MCF 10A (cell line): ENCODE measurements at regions of chr11 and their contacts with region 1.

Region 1: DNA sequence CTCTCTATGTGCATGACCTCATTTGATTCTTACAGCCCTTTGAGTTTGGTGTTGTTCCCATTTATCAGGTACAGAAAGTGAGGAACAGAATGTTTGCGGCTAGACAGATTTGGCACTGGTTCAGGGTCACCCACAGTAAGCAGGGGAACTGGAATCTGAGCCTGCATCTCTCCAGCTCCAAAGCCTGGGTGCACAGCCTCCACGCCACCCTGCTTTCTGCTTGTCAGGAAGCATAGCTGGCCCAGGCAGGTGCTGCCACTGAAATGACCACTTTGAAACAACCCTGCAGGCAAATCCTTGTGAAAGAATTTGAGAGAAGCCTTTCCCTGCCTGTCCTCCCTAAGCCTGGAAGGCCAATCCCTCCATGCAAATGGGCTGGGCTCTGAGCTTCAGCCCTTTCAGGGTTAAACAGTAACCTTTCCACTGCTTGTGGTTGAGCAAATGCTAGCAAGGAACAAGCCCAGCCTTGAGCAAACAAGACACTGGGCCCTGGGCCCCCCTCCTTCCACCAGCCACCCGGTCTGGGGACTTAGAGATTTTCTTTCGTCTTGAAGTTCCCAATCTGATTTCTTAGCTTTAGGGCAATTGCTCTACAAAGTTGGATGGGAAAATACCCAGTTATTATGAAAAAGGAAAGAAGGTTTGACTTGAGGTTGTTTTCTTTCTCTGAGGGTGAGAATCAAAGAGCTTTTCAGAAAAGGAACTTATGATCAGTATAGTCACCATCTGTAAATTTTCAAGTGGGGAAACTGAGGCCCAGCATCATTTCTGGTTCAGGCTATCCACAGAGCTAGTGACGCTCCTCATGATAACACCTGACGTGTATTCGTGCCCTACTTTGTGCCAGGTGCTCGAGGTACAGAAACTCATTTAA is 19.4 kb downstream of the EHF start:
- DNase-seq: peak; percentile 86
- H3K4me3 Mint-ChIP-seq: peak overlapping the region; percentile 45
- H3K27ac Mint-ChIP-seq: peak overlapping the region; percentile 87
- H3K4me1 Mint-ChIP-seq: peaks cover 51% of the 10 kb centered on the region
- H3K27me3 Mint-ChIP-seq: no peaks in the 10 kb centered on the region
- CTCF ChIP-seq: no peak

Region 2: DNA sequence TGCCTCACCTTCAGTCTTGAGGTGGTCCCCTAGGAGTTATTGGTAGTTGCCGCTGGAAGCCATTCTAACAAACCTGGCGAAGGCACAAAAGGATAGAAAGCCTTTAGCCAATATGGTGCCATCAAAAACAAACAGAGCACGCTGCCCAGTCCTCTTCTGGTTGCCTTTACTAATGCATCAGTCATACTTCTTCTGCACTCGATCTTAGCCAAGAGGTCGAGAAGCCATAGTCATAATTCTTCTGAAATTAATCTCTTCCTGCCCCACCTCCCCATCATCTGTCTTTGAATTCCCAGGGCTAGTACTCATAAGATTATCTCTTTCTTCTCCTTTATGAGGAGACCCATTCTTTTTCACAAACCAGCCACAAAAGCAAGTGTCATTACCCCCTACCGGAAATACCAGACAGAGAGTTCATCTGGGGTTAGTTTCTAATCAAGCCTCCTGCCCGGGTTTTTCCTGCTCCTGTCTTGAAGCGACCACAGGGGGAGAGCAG is 40.8 kb before region 1 on chr11:
- CTCF ChIA-PET with region 1: interaction called, 3 read pairs
- POLR2A ChIA-PET with region 1: interaction called, 22 read pairs
- intact Hi-C with region 1: no loop called
- DNase-seq: peak; percentile 51
- H3K4me3 Mint-ChIP-seq: no peak overlapping the region
- H3K27ac Mint-ChIP-seq: peak overlapping the region; percentile 25
- H3K4me1 Mint-ChIP-seq: peaks cover 33% of the 10 kb centered on the region
- H3K27me3 Mint-ChIP-seq: no peaks in the 10 kb centered on the region
- CTCF ChIP-seq: no peak

Region 3: GRCh38 chr11:34749666-34750659 is 109.7 kb after region 1 on chr11:
- CTCF ChIA-PET with region 1: interaction called, 3 read pairs
- POLR2A ChIA-PET with region 1: interaction called, 16 read pairs
- intact Hi-C with region 1: no loop called
- DNase-seq: peak; percentile 96
- H3K4me3 Mint-ChIP-seq: peak overlapping the region; percentile 66
- H3K27ac Mint-ChIP-seq: peak overlapping the region; percentile 90
- H3K4me1 Mint-ChIP-seq: peaks cover 46% of the 10 kb centered on the region
- H3K27me3 Mint-ChIP-seq: no peaks in the 10 kb centered on the region
- CTCF ChIP-seq: no peak

Region 4: DNA sequence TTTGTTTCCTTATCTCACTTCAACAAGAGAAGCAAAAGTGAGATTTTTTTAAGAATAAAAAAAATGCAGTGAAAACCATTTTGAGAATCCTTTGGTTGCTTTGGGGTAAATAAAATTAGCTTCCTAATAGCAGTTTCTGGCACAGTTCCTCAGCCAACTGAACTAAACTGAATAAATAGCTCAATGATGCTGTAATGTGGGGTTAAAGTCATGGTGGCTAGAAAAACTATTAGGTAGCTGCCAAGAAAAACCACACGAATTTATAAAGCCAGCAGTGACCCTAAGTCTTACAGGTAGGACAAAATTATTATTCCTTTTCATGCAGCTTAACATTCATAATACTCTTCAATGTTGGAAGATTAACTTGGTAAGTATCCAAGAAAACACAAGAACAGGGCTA is 133.5 kb after region 1 on chr11:
- CTCF ChIA-PET with region 1: no interaction called
- POLR2A ChIA-PET with region 1: no interaction called
- intact Hi-C with region 1: no loop called
- DNase-seq: no peak
- H3K4me3 Mint-ChIP-seq: no peak overlapping the region
- H3K27ac Mint-ChIP-seq: peak overlapping the region; percentile 57
- H3K4me1 Mint-ChIP-seq: peaks cover 8% of the 10 kb centered on the region
- H3K27me3 Mint-ChIP-seq: no peaks in the 10 kb centered on the region
- CTCF ChIP-seq: no peak

Region 5: DNA sequence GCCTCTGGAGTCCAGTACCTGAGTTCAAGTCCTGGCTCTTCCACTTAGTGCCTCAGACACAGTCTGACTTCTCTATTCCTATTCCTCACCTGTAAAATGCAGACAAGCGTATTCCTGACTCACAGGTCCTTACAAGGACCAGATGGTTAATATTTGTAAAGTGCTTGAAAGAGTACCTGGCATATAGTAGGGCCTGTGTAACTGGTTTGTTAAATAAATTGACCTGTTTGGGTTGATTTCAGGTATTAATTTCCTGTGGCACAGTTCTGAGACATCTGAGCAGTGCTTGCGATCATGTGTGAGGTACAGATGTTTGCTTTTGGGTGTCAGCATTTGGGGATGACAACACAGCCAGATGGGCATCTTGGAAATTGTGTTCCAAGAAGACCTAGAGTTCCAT is 148.4 kb after region 1 on chr11:
- CTCF ChIA-PET with region 1: no interaction called
- POLR2A ChIA-PET with region 1: no interaction called
- intact Hi-C with region 1: no loop called
- DNase-seq: no peak
- H3K4me3 Mint-ChIP-seq: no peak overlapping the region
- H3K27ac Mint-ChIP-seq: no peak overlapping the region
- H3K4me1 Mint-ChIP-seq: peaks cover 4% of the 10 kb centered on the region
- H3K27me3 Mint-ChIP-seq: no peaks in the 10 kb centered on the region
- CTCF ChIP-seq: no peak